ENCODE measurements at regions of chr3 and their contacts with region 1.

Region 1: DNA sequence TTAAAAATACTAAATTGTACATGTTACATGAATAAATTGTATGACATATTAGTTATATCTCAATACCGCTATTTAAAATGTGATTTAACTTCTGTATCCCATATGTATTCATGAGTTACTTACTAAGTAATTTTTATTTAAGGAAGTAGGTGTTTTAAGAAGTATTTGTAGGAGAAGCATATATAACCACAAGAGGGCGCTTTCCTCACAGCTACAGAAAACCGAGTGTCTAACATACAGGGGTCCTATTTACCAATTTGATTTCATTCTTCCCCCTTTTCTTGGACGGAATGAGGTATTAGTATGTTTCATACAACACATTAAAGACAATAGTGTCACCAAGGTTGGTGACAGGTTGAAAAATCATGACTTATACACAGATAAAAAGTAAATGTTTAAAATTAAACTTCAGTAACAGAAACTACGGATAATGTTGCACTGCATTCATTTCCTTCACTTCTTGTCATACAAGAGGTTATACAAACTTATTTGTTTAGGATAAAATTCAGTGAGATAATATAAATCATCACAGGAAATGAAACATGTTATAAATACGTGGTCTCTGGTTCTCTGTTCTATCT is 253.6 kb downstream of the MAGI1 start:
- DNase-seq: no peak
- H3K4me3 Mint-ChIP-seq: no peak overlapping the region
- H3K27ac Mint-ChIP-seq: no peak overlapping the region
- H3K4me1 Mint-ChIP-seq: no peaks in the 10 kb centered on the region
- H3K27me3 Mint-ChIP-seq: no peaks in the 10 kb centered on the region

Region 2: GRCh38 chr3:65796676-65797075 is 11.5 kb after region 1 on chr3:
- intact Hi-C with region 1: no loop called
- DNase-seq: no peak
- H3K4me3 Mint-ChIP-seq: no peak overlapping the region
- H3K27ac Mint-ChIP-seq: no peak overlapping the region
- H3K4me1 Mint-ChIP-seq: no peaks in the 10 kb centered on the region
- H3K27me3 Mint-ChIP-seq: no peaks in the 10 kb centered on the region

Region 3: GRCh38 chr3:65871305-65872141 is 86.4 kb after region 1 on chr3:
- intact Hi-C with region 1: no loop called
- DNase-seq: no peak
- H3K4me3 Mint-ChIP-seq: no peak overlapping the region
- H3K27ac Mint-ChIP-seq: no peak overlapping the region
- H3K4me1 Mint-ChIP-seq: no peaks in the 10 kb centered on the region
- H3K27me3 Mint-ChIP-seq: no peaks in the 10 kb centered on the region

Region 4: GRCh38 chr3:66138336-66139313 is 353.5 kb after region 1 on chr3:
- intact Hi-C with region 1: loop called (anchors 2 kb)
- DNase-seq: peak; percentile 64
- H3K4me3 Mint-ChIP-seq: no peak overlapping the region
- H3K27ac Mint-ChIP-seq: no peak overlapping the region
- H3K4me1 Mint-ChIP-seq: no peaks in the 10 kb centered on the region
- H3K27me3 Mint-ChIP-seq: no peaks in the 10 kb centered on the region

Region 5: DNA sequence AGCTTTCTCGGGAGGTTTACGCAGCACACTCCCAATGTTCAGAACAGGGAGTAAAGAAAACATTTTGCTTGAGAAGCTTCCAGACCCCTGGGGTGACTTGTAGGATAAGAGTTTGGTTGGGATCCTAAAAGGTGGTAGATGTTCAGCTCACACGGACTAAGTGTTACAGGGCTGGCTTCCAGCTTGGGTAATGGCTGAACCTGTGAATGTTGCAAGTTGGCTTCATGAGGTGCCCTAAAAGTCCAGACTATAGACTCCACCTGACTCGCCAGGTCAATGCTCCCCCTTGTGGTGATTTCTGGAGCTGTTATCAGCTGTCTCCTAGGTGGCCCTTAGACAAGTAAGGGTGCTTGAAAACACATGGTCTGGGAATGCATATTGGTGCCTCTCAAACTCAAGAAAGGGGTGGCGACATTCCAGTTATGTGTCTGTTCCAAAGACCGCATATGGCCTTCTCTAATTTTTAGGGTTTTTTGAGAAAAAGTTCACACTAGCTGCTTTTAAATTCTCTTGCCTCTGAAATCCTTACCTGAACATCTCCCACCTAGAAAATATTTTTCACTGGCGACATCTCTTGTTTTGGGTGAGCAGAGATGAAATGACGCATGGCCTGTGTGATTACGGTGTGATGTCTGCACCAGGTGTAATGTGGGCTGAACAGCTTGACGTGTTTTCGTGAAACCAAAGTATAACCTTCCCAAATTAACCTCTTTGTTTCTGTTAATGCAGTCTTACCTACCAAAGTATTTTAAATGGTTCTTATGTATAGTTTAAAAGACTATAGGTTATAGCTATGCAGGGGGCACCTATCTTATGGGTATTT is 1037.2 kb after region 1 on chr3:
- intact Hi-C with region 1: loop called (anchors 10 kb)
- DNase-seq: peak; percentile 91
- H3K4me3 Mint-ChIP-seq: no peak overlapping the region
- H3K27ac Mint-ChIP-seq: no peak overlapping the region
- H3K4me1 Mint-ChIP-seq: no peaks in the 10 kb centered on the region
- H3K27me3 Mint-ChIP-seq: peaks cover 7% of the 10 kb centered on the region

Measured in activated CD4-positive, alpha-beta T cell treated with anti-CD3 and anti-CD28 coated beads, Interleukin-2, amount 10 ng/mL, durations not matched to agents 24 days and 14 days (primary cell).